ENCODE measurements at regions of chr4 and their contacts with region 1.

Region 1: GRCh38 chr4:110516106-110516922 is 40.4 kb downstream of the ENPEP start:
- DNase-seq: peak; percentile 61 to 76 (median 65)
- H3K4me3 ChIP-seq: peak overlapping the region; percentile 92
- H3K4me3 Mint-ChIP-seq: peak overlapping the region; percentile 86 to 98 (median 97)
- H3K27ac ChIP-seq: no peak overlapping the region
- H3K27ac Mint-ChIP-seq: peak overlapping the region in 7 of 8 donors; percentile 78 to 94 (median 90)
- H3K4me1 ChIP-seq: peaks cover 10% of the 10 kb centered on the region
- H3K4me1 Mint-ChIP-seq: peaks cover 12 to 18% (median 15%) of the 10 kb centered on the region in 3 donors
- H3K27me3 ChIP-seq: no peaks in the 10 kb centered on the region
- H3K27me3 Mint-ChIP-seq: peaks cover 3 to 10% of the 10 kb centered on the region in 2 donors

Region 2: GRCh38 chr4:110005461-110006056 is 510.8 kb before region 1 on chr4:
- CTCF ChIA-PET with region 1: interaction called, 106 read pairs
- POLR2A ChIA-PET with region 1: no interaction called
- DNase-seq: peak in 2 of 5 donors; percentile 35 to 42
- H3K4me3 ChIP-seq: no peak overlapping the region
- H3K4me3 Mint-ChIP-seq: no peak overlapping the region
- H3K27ac ChIP-seq: no peak overlapping the region
- H3K27ac Mint-ChIP-seq: no peak overlapping the region
- H3K4me1 ChIP-seq: no peaks in the 10 kb centered on the region
- H3K4me1 Mint-ChIP-seq: peaks cover 0 to 3% (median 0%) of the 10 kb centered on the region in 3 donors
- H3K27me3 ChIP-seq: no peaks in the 10 kb centered on the region
- H3K27me3 Mint-ChIP-seq: peaks cover 0 to 4% of the 10 kb centered on the region in 2 donors